Left cardiac atrium (tissue), 4 donors: ENCODE measurements at regions of chr20 and their contacts with region 1.

Region 1: GRCh38 chr20:46363800-46364634 is 42.4 kb downstream of the ELMO2 start:
- DNase-seq: peak; percentile 89
- ATAC-seq: peak; percentile 96

Region 2: DNA sequence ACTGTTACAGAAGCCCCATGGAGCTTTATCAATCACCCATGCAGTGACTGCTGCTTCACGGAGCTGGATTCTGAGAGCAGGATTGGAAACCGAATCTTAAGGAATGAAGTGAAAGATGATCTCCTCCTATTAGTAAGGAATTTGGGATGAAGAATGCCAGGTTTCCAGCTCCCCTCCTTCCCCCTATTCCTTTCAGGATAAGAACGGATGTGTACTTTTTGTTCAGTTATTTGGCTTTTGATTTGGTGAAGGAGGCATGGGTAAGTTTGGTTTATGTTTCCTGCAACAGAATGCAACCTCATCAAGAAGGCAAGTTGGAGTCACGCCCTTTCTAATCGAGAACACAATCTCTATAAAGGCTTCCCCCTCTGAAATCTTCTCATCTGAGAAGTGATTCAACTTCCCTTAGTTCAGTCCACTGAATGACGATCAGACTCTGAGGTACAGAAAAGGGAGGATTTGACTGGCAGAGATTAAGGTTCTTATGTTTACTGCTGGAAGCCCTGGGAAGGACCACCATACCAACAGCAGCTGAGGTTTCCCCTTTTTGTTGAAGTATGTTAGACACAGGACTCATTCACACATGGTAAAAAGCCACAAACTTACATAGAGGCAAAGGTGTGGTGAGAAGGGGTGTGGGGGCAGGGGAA is 36.9 kb after region 1 on chr20:
- intact Hi-C with region 1: loop called in 1 of 2 experiments (anchors 5 kb)
- DNase-seq: no peak
- ATAC-seq: peak; percentile 6 to 16